Activated T-helper 2 cell treated with anti-CD3 and anti-CD28 coated beads, Interferon-gamma antibody, Interleukin-2, Interleukin-4, amounts not matched to agents 10 μg/mL and 5 μg/mL and 100 μg/mL, durations not matched to agents 14 hours and 24 hours and 36 hours (primary cell): ENCODE measurements at regions of chr12 and their contacts with region 1.

Region 1: DNA sequence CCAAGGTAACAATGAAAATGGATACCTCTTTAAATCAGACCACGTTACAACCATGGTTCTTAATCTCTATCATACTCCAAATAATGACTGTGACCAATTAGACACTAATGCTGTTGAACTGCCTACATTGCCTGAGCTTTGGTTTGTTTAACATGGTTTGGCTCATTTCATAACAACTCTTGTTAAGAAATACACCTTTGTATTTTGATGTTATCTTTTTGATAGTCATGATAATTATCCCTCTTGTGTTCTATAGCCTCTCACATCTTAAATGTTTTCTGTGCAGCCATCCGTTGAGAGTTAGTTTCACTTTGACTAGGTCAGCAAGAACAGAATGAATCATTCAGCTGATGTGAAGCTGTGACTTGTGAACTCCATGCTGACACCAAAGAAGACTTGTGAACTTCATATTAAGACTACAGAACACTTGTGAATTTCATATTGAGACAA is 75.5 kb upstream of the RERGL start:
- DNase-seq: peak; percentile 14
- H3K4me3 Mint-ChIP-seq: peak overlapping the region; percentile 2
- H3K27ac Mint-ChIP-seq: peak overlapping the region; percentile 69
- H3K4me1 Mint-ChIP-seq: peaks cover 12% of the 10 kb centered on the region
- H3K27me3 Mint-ChIP-seq: no peaks in the 10 kb centered on the region

Region 2: DNA sequence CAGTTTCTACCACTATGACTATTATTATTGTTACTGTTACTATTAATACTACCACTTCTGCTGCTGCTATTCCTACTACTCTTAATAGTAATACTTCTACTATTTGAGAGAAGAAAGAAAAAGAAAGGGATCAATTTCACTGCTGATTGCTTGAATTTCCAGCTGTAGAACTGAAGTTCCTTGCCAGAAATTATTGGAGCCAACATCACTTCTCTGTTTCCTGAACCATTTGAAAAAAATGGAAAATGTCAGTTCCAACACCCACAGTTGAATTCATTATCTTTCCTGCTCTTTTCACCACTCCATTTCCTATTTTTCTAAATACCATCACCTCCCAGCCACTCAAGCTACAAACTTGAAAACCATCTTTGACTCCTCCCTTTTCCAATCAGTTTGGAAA is 41.8 kb after region 1 on chr12:
- intact Hi-C with region 1: no loop called
- DNase-seq: no peak
- H3K4me3 Mint-ChIP-seq: no peak overlapping the region
- H3K27ac Mint-ChIP-seq: no peak overlapping the region
- H3K4me1 Mint-ChIP-seq: no peaks in the 10 kb centered on the region
- H3K27me3 Mint-ChIP-seq: no peaks in the 10 kb centered on the region

Region 3: DNA sequence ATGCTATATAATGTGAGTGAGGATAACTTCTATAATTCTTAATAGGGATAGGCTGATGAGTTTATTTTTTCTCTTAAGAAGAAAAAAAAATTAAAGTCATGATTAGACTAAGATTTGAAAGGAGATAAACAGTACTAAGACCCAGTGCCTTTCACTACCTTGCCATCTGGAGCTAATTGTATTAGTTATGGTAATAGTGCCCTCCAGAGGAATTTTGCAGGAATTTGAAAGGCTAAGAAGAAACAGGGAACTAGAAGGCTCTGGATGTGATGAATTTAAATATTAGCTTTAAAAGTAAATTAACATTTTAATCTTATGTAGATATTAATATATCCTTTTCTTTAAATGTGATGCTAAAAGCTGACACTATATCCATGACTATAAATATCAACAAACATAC is 59.3 kb after region 1 on chr12:
- intact Hi-C with region 1: loop called (anchors 10 kb)
- DNase-seq: no peak
- H3K4me3 Mint-ChIP-seq: no peak overlapping the region
- H3K27ac Mint-ChIP-seq: no peak overlapping the region
- H3K4me1 Mint-ChIP-seq: no peaks in the 10 kb centered on the region
- H3K27me3 Mint-ChIP-seq: no peaks in the 10 kb centered on the region